MCF 10A (cell line): ENCODE measurements at regions of chr10 and their contacts with region 1.

Region 1: GRCh38 chr10:3805791-3806461 is 20.9 kb upstream of the KLF6 start:
- DNase-seq: peak; percentile 73
- H3K4me3 Mint-ChIP-seq: peak overlapping the region; percentile 23
- H3K27ac Mint-ChIP-seq: peak overlapping the region; percentile 100
- H3K4me1 Mint-ChIP-seq: peaks cover 47% of the 10 kb centered on the region
- H3K27me3 Mint-ChIP-seq: no peaks in the 10 kb centered on the region
- CTCF ChIP-seq: no peak

Region 2: DNA sequence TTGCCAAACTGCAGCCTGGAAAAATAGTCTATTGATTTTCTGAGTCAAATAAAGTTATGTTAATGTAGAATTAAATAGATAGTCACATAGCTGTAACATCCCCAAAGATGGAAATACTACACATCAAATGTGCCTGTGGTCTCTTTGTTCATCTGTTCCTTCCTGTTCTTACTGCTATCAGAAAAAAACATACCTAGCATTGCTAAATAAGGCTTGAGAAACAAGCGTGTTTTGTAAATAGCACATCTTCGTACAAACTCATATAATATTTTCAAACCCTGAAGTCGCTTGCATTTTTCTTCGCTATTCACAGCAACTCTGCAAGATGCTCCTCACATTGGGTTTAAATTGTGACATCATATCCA is 137.0 kb before region 1 on chr10:
- CTCF ChIA-PET with region 1: no interaction called
- POLR2A ChIA-PET with region 1: no interaction called
- intact Hi-C with region 1: no loop called
- DNase-seq: no peak
- H3K4me3 Mint-ChIP-seq: peak overlapping the region; percentile 67
- H3K27ac Mint-ChIP-seq: peak overlapping the region; percentile 94
- H3K4me1 Mint-ChIP-seq: peaks cover 12% of the 10 kb centered on the region
- H3K27me3 Mint-ChIP-seq: no peaks in the 10 kb centered on the region
- CTCF ChIP-seq: no peak

Region 3: GRCh38 chr10:3792710-3793219 is 13.2 kb before region 1 on chr10:
- CTCF ChIA-PET with region 1: no interaction called
- POLR2A ChIA-PET with region 1: interaction called, 16 read pairs
- intact Hi-C with region 1: no loop called
- DNase-seq: no peak
- H3K4me3 Mint-ChIP-seq: no peak overlapping the region
- H3K27ac Mint-ChIP-seq: no peak overlapping the region
- H3K4me1 Mint-ChIP-seq: no peaks in the 10 kb centered on the region
- H3K27me3 Mint-ChIP-seq: no peaks in the 10 kb centered on the region
- CTCF ChIP-seq: no peak

Region 4: DNA sequence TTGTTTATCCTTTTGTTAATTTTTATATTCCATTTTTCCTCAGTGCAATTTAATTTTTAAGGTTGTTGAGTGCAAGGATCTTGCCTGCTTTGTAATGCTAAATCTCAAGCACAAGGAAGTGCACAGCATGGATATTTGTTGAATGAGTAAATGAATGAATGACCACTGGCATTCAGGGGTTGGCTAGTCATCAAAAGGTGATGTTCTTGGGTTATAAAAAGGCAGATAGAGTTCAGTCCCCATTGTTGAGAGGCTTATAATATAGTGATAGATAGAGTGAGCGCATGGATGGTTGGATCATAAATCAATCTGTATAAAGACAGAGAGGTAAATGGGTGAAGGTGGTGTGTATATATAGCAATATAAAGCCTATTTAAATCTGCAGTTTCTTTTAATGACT is 172.2 kb after region 1 on chr10:
- CTCF ChIA-PET with region 1: no interaction called
- POLR2A ChIA-PET with region 1: no interaction called
- intact Hi-C with region 1: loop called (anchors 5 kb)
- DNase-seq: no peak
- H3K4me3 Mint-ChIP-seq: no peak overlapping the region
- H3K27ac Mint-ChIP-seq: no peak overlapping the region
- H3K4me1 Mint-ChIP-seq: no peaks in the 10 kb centered on the region
- H3K27me3 Mint-ChIP-seq: no peaks in the 10 kb centered on the region
- CTCF ChIP-seq: no peak